Cardiac septum (tissue), 1 donor: ENCODE measurements at regions of chr15 and their contacts with region 1.

Region 1: DNA sequence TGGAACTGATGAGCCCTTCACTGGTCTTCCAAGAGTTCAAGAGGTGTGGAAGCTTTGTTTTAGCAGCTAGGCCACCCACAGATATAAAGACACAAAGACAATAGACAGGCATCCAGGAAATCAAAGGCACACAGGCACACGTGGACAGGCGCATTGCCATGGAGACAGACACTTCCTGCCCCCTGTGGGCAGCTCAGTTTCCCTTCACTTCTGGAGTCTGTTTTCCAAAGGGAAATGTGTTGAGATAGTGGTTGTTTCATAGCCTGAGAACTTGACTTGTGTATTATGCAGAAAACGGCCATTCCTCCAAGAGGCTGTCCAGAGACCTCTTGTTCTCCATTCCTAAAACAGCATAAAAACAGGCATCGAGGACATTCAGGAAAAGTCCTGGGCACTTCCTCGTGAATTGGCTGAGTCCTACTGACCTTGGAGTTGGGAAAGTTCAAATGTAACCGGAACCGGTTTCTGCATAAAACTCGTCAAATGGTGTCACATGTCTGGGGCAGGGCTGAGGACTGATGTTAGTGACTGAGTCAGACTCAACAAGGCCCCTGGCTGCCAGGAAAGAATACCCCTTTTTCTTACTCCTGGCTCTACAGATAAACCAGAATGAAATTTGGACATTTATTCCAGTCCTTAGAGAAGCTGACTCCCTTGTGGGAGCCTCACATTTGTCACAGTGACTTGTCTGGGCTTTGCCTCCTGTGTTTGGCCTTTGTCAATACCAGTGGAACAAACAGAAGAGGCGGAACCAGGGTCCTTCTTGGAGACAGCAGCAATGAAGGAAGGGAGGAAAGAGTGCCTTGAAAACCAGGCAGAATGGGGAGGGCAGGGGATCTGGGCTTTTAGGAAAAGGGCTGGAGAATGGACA is 1.3 kb downstream of the ALPK3 start:
- DNase-seq: no peak

Region 2: DNA sequence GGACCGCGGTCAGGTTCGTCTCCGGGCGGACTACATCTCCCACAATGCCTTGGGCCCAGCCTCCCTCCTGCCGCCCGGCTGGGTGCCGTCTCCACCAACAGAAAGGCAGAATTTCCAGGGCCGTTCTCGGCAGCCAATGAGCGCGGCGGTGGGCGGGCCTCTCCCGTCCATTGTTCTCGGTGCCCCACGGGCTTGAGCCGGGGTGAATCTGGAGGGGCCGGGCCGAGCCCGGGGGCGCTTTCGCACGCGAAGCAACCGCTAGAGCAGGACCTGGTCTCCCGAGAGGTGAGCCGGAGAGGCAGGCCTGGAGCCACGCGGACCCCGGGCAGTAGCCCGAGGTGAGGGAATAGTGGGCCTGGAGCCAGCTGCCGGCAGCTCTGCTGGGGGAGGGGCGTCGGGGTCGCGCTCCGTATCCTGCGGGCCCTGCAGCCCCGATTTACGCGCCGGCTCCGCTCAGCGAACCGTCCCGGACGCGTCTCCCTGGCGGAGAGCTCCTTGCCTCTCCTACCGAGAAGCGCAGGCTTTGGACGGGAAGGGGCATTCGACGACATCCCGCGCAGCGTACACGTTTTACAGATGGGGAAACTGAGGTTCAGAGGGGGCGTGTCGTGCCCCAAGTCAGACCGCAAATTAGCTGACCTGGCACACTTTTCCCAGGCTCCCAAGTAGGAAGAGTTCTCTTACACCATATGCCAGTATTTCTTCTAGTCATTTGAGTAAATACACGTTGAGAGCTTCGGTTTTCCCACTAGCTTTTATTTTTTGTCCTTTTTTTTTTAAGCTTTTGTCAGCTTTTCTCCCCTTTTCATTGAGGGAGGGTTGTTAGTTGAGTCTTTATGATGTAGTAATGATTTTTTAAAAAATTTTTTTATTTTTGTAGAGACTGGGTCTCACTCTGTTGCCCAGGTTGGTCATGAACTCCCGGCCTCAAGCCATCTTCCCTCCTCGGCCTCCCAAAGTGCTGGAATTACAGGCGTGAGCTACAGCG is 217.4 kb before region 1 on chr15 and contains the start of gene ZSCAN2:
- intact Hi-C with region 1: loop called (anchors 5 kb)
- DNase-seq: peak; percentile 98
- total RNA-seq, gene ZSCAN2: 4.6 TPM

Region 3: GRCh38 chr15:84748274-84749110 is 70.0 kb before region 1 on chr15 and contains the start of gene ZNF592:
- intact Hi-C with region 1: loop called (anchors 2 kb)
- DNase-seq: peak; percentile 94
- total RNA-seq, gene ZNF592: 25.7 TPM

Region 4: GRCh38 chr15:84840741-84841429 is 22.4 kb after region 1 on chr15:
- intact Hi-C with region 1: loop called (anchors 2 kb)
- DNase-seq: peak; percentile 90